Heart left ventricle (tissue), 16 donors: ENCODE measurements at regions of chr7 and their contacts with region 1.

Region 1: GRCh38 chr7:78134256-78134655 is 335.7 kb downstream of the PHTF2 start:
- DNase-seq: no peak
- ATAC-seq: no peak
- H3K4me3 ChIP-seq: no peak overlapping the region
- H3K27ac ChIP-seq: no peak overlapping the region
- H3K4me1 ChIP-seq: no peaks in the 10 kb centered on the region
- H3K27me3 ChIP-seq: no peaks in the 10 kb centered on the region
- CTCF ChIP-seq: peak in 8 of 12 donors; percentile 23 to 53 (median 44)
- POLR2A ChIP-seq: no peak

Region 2: GRCh38 chr7:77940647-77941046 is 193.6 kb before region 1 on chr7:
- intact Hi-C with region 1: loop called in 1 of 10 experiments (anchors 10 kb)
- DNase-seq: no peak
- ATAC-seq: no peak
- H3K4me3 ChIP-seq: no peak overlapping the region
- H3K27ac ChIP-seq: no peak overlapping the region
- H3K4me1 ChIP-seq: peaks cover 0 to 2% (median 0%) of the 10 kb centered on the region in 12 donors
- H3K27me3 ChIP-seq: no peaks in the 10 kb centered on the region
- CTCF ChIP-seq: peak; percentile 25 to 78 (median 61)
- POLR2A ChIP-seq: no peak

Region 3: DNA sequence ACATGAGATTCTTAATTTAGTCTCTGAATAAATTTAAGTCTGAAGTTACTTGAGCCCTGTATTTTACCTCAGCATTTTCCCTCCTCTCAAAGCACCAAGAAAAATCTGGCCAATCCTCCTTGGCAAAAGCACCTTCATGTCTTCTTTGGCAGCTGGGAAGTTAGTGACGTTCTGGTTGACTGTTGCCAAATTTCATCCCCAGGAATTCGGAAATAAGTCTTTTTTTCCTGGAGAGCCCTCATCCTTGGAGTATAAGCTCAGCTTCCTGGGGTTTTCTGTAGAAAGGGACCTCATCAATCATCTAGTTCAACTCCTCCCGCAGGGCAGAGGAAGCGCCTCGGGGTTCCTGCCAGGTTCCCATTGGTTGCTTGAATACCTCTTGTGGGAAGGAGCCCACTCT is 41.9 kb after region 1 on chr7:
- intact Hi-C with region 1: no loop called
- DNase-seq: no peak
- ATAC-seq: no peak
- H3K4me3 ChIP-seq: no peak overlapping the region
- H3K27ac ChIP-seq: peak overlapping the region in 1 of 12 donors; percentile 11
- H3K4me1 ChIP-seq: peaks cover 0 to 13% (median 0%) of the 10 kb centered on the region in 12 donors
- H3K27me3 ChIP-seq: no peaks in the 10 kb centered on the region
- CTCF ChIP-seq: no peak
- POLR2A ChIP-seq: no peak